ENCODE measurements at regions of chr5 and their contacts with region 1.

Region 1: GRCh38 chr5:149551200-149552037 is at the start of gene CSNK1A1:
- DNase-seq: peak; percentile 100
- ATAC-seq: peak; percentile 97
- H3K4me3 ChIP-seq: peak within 1 kb of the TSS; percentile 99
- H3K27ac ChIP-seq: peak within 1 kb of the TSS; percentile 99
- H3K4me1 ChIP-seq: peaks cover 33% of the 10 kb centered on the region
- H3K27me3 ChIP-seq: no peaks in the 10 kb centered on the region
- CTCF ChIP-seq: peak; percentile 79
- total RNA-seq, gene CSNK1A1: 191 TPM

Region 2: DNA sequence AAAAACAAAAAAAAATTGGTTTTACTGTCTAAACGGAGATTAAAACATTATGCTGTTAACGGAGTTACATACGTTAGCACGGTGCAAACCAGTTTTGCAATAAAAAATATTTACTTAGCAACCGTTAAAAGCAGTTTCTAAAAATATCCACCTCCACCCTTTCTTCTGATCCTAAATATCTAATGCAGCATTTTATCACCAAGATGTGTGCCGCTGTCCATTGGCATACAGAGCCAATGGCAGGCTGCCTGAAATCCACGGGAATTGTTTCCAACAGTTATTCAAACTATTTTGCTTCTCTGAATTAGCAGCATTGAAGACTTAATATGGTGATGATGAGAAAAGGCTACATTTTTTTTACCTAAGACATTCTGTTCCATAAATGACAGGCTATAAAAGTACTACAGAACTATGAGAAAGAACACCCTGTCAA is 61.8 kb before region 1 on chr5:
- intact Hi-C with region 1: loop called (anchors 10 kb)
- DNase-seq: no peak
- ATAC-seq: no peak
- H3K4me3 ChIP-seq: no peak overlapping the region
- H3K27ac ChIP-seq: peak overlapping the region; percentile 2
- H3K4me1 ChIP-seq: peaks cover 35% of the 10 kb centered on the region
- H3K27me3 ChIP-seq: no peaks in the 10 kb centered on the region
- CTCF ChIP-seq: no peak